CD4-positive, alpha-beta memory T cell (primary cell): ENCODE measurements at regions of chr22 and their contacts with region 1.

Region 1: GRCh38 chr22:20463324-20464095 is 25.9 kb upstream of the SCARF2 start:
- DNase-seq: peak; percentile 47 to 67 (median 64)
- H3K4me3 ChIP-seq: peak overlapping the region in 1 of 2 donors; percentile 54
- H3K4me3 Mint-ChIP-seq: peak overlapping the region; percentile 0 to 84 (median 79)
- H3K27ac ChIP-seq: peak overlapping the region; percentile 65
- H3K27ac Mint-ChIP-seq: peak overlapping the region; percentile 94 to 99 (median 97)
- H3K4me1 ChIP-seq: peaks cover 67% of the 10 kb centered on the region
- H3K4me1 Mint-ChIP-seq: peaks cover 44 to 79% (median 58%) of the 10 kb centered on the region in 4 donors
- H3K27me3 ChIP-seq: no peaks in the 10 kb centered on the region
- H3K27me3 Mint-ChIP-seq: no peaks in the 10 kb centered on the region

Region 2: GRCh38 chr22:20319745-20320658 is 143.5 kb before region 1 on chr22 and contains the start of gene DGCR6L:
- CTCF ChIA-PET with region 1: no interaction called
- POLR2A ChIA-PET with region 1: interaction called, 12 read pairs
- intact Hi-C with region 1: no loop called
- DNase-seq: peak; percentile 95 to 97 (median 96)
- H3K4me3 ChIP-seq: peak within 1 kb of the TSS; percentile 82 to 92
- H3K4me3 Mint-ChIP-seq: peak within 1 kb of the TSS; percentile 89 to 95 (median 91)
- H3K27ac ChIP-seq: peak within 1 kb of the TSS; percentile 81
- H3K27ac Mint-ChIP-seq: peak within 1 kb of the TSS; percentile 84 to 97 (median 91)
- H3K4me1 ChIP-seq: peaks cover 58% of the 10 kb centered on the region
- H3K4me1 Mint-ChIP-seq: peaks cover 35 to 70% (median 53%) of the 10 kb centered on the region in 4 donors
- H3K27me3 ChIP-seq: no peaks in the 10 kb centered on the region
- H3K27me3 Mint-ChIP-seq: no peaks in the 10 kb centered on the region
- total RNA-seq, gene DGCR6L: 39.9 to 44.6 TPM

Region 3: GRCh38 chr22:20383538-20383937 is 80.0 kb before region 1 on chr22:
- CTCF ChIA-PET with region 1: no interaction called
- POLR2A ChIA-PET with region 1: no interaction called
- intact Hi-C with region 1: no loop called
- DNase-seq: no peak
- H3K4me3 ChIP-seq: no peak overlapping the region
- H3K4me3 Mint-ChIP-seq: no peak overlapping the region
- H3K27ac ChIP-seq: no peak overlapping the region
- H3K27ac Mint-ChIP-seq: no peak overlapping the region
- H3K4me1 ChIP-seq: no peaks in the 10 kb centered on the region
- H3K4me1 Mint-ChIP-seq: no peaks in the 10 kb centered on the region
- H3K27me3 ChIP-seq: peaks cover 4% of the 10 kb centered on the region
- H3K27me3 Mint-ChIP-seq: peaks cover 3 to 13% of the 10 kb centered on the region in 2 donors

Region 4: GRCh38 chr22:20418211-20418788 is 45.2 kb before region 1 on chr22:
- CTCF ChIA-PET with region 1: interaction called, 33 read pairs
- POLR2A ChIA-PET with region 1: interaction called, 8 read pairs
- intact Hi-C with region 1: no loop called
- DNase-seq: peak; percentile 67 to 74 (median 69)
- H3K4me3 ChIP-seq: peak overlapping the region in 1 of 2 donors; percentile 51
- H3K4me3 Mint-ChIP-seq: peak overlapping the region in 7 of 8 donors; percentile 39 to 74 (median 70)
- H3K27ac ChIP-seq: no peak overlapping the region
- H3K27ac Mint-ChIP-seq: peak overlapping the region in 1 of 7 donors; percentile 35
- H3K4me1 ChIP-seq: peaks cover 6% of the 10 kb centered on the region
- H3K4me1 Mint-ChIP-seq: peaks cover 0 to 8% (median 3%) of the 10 kb centered on the region in 4 donors
- H3K27me3 ChIP-seq: no peaks in the 10 kb centered on the region
- H3K27me3 Mint-ChIP-seq: no peaks in the 10 kb centered on the region

Region 5: DNA sequence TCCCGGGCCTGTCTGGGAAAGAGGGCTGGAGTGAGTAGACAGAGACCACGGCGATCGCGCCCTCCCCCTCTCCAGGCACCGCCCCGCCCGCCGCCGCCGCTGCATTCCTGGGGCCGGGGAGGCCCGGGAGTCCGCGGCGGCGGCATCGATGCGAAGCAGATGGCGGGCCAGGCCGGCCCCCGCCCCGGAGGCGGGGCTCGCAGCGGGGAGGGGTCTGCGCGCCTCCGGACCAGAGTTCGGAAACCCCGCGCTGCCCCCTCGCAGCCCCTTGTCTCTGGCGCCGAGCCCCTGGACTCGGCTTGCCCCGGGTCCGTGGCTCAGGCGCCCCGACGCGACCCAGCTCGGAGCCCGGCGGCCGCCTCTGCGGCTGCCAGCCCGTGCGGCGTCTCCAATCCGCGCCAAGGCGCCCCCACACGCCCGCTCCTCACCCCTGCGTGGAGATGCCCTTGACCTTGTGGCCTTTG is 27.2 kb before region 1 on chr22:
- CTCF ChIA-PET with region 1: interaction called, 3 read pairs
- POLR2A ChIA-PET with region 1: interaction called, 11 read pairs
- intact Hi-C with region 1: no loop called
- DNase-seq: no peak
- H3K4me3 ChIP-seq: peak overlapping the region in 1 of 2 donors; percentile 43
- H3K4me3 Mint-ChIP-seq: peak overlapping the region; percentile 79 to 94 (median 84)
- H3K27ac ChIP-seq: no peak overlapping the region
- H3K27ac Mint-ChIP-seq: peak overlapping the region in 1 of 7 donors; percentile 44
- H3K4me1 ChIP-seq: peaks cover 27% of the 10 kb centered on the region
- H3K4me1 Mint-ChIP-seq: peaks cover 7 to 35% (median 12%) of the 10 kb centered on the region in 4 donors
- H3K27me3 ChIP-seq: peaks cover 28% of the 10 kb centered on the region
- H3K27me3 Mint-ChIP-seq: peaks cover 25 to 26% of the 10 kb centered on the region in 2 donors

Region 6: DNA sequence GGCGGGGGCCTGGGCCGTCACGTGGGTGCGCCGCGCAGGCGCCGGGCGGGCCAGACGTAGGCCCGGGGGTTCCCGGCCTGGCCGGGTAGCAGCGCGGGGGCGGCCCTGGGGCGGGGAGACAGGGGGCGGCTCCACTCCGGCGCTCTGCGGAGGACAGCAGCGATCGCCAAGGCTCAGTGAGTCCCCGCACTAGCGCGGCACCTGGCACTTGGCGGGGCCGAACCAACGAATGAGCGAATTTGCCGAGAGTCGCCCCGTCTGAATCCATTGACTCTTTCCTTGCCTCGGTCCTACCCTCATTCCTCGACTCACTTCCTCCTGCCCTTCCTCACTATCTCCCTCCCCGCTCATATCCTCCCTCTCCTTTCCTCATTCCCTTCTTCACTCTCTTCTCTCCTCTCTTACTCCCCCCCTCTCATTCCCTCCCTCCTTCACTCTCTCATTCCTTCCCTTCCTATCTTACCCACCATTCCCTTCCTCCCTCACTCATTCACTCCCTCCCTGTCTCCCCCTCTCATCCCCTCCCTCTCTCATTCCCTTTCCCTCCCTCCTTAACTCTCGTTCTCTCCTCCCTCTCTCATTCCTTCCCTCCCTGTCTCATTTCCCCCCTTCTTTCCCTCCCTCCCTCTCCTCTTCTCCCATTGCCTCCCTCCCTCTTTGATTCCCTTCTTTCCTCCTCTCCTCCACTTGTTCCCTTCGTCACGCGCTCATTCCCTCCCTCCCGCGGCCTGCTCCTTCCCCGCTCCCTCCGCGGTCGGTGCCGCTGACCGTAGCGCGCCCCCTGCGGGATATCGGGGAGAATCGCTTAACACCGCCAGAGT is 32.6 kb after region 1 on chr22:
- CTCF ChIA-PET with region 1: interaction called, 30 read pairs
- POLR2A ChIA-PET with region 1: interaction called, 93 read pairs
- intact Hi-C with region 1: loop called (anchors 1 kb)
- DNase-seq: peak; percentile 89 to 92 (median 91)
- H3K4me3 ChIP-seq: peak overlapping the region; percentile 53 to 85
- H3K4me3 Mint-ChIP-seq: peak overlapping the region; percentile 90 to 96 (median 93)
- H3K27ac ChIP-seq: peak overlapping the region; percentile 91
- H3K27ac Mint-ChIP-seq: peak overlapping the region; percentile 83 to 98 (median 95)
- H3K4me1 ChIP-seq: peaks cover 42% of the 10 kb centered on the region
- H3K4me1 Mint-ChIP-seq: peaks cover 21 to 56% (median 40%) of the 10 kb centered on the region in 4 donors
- H3K27me3 ChIP-seq: no peaks in the 10 kb centered on the region
- H3K27me3 Mint-ChIP-seq: no peaks in the 10 kb centered on the region

Region 7: DNA sequence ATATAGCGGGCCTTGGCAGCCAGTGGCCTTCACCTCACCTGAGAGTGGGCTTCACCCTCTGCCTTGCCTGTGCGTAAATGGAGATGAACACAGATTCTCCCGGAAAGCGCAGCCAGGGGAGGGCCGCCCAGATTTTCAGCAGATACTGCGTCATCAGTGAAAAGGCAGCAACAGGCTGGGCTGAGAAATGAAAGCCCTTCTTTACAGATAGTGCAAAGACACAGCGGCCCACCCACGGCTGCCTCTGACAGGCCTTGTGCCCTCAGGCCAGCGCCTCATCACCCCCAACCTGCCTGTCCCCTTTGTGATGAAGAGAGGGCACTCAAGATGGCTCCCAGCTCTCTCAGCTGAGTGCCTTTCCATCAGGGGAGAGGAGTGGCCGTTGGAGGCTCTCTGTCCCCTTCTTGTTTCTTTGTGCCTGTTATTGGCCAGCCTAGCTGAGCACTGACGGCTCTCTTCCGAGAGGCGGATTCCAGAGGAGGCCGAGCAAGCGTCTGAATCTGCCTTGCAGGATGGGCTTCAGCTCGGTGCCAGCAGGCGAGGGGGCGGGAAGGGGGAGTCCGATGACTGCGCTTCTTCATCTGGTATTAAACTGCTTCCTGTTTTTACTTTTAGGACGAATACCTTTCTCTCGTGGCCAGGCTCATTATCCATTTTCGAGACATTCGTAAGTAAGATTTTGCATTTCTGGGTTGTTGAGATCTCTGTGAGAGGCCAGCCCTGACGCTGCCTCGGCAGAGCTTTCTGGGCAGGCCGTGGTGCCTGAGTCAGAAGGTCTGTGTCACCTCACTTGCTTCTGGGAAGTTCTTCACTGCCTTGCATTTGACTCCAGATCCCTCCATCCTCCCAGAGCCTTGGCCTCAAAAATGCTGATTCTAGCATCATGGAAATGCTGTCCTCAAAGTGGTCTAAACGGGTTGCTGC is 87.6 kb after region 1 on chr22:
- CTCF ChIA-PET with region 1: interaction called, 4 read pairs
- POLR2A ChIA-PET with region 1: interaction called, 70 read pairs
- intact Hi-C with region 1: no loop called
- DNase-seq: peak; percentile 45 to 73 (median 57)
- H3K4me3 ChIP-seq: peak overlapping the region; percentile 7 to 15
- H3K4me3 Mint-ChIP-seq: peak overlapping the region; percentile 84 to 89 (median 88)
- H3K27ac ChIP-seq: peak overlapping the region; percentile 75
- H3K27ac Mint-ChIP-seq: peak overlapping the region; percentile 92 to 99 (median 98)
- H3K4me1 ChIP-seq: peaks cover 91% of the 10 kb centered on the region
- H3K4me1 Mint-ChIP-seq: peaks cover 58 to 92% (median 76%) of the 10 kb centered on the region in 4 donors
- H3K27me3 ChIP-seq: no peaks in the 10 kb centered on the region
- H3K27me3 Mint-ChIP-seq: no peaks in the 10 kb centered on the region